ENCODE measurements at regions of chr16 and their contacts with region 1.

Region 1: GRCh38 chr16:85393674-85394483 is 219.2 kb upstream of the GSE1 start:
- DNase-seq: peak; percentile 75
- H3K4me3 ChIP-seq: no peak overlapping the region
- H3K27ac ChIP-seq: no peak overlapping the region
- H3K4me1 ChIP-seq: peaks cover 43% of the 10 kb centered on the region
- H3K27me3 ChIP-seq: no peaks in the 10 kb centered on the region
- CTCF ChIP-seq: peak; percentile 96

Region 2: DNA sequence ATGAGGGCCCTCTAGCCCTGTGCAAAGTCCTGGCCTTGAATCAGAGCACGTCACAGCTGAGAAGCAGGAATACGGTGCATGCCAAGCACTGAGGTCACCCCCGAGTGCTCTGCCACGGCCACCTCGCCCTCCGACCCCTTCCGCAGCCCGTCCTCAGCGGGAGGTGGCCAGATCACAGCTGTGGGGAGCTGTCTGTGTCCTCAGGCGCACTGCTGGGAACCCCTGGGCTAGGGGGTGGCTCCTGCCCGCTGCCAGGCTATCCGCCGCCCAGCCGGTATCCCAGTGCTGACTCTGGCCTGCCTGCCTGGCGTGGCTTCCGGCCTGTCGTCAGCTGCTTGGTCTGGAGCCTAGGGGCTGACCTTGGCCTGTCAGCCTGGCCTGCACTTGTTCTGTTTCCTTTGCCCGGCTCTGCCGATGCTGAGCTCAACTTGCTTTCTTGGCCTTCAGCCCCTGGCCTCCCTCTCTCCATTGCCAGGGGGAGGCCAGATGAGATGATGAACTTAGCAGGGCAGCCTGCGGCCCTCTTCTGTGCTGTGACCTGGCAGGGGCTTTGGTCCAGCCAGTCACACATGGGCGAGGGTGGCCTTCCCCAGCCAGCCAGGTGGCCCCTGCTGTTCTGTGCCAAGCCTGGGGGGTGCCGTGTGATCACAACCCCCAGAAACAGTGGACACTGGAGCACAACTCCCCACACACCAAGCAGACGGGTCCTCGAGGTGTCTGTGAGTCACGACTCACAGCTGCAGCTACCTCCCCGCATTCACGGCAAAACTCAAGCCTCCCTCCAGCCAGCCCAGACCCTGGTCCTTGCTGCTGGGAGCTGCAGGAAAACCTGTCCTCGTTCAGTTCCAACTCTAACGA is 459.9 kb before region 1 on chr16:
- CTCF ChIA-PET with region 1: no interaction called
- POLR2A ChIA-PET with region 1: no interaction called
- intact Hi-C with region 1: no loop called
- DNase-seq: no peak
- H3K4me3 ChIP-seq: no peak overlapping the region
- H3K27ac ChIP-seq: no peak overlapping the region
- H3K4me1 ChIP-seq: no peaks in the 10 kb centered on the region
- H3K27me3 ChIP-seq: no peaks in the 10 kb centered on the region
- CTCF ChIP-seq: no peak

Region 3: DNA sequence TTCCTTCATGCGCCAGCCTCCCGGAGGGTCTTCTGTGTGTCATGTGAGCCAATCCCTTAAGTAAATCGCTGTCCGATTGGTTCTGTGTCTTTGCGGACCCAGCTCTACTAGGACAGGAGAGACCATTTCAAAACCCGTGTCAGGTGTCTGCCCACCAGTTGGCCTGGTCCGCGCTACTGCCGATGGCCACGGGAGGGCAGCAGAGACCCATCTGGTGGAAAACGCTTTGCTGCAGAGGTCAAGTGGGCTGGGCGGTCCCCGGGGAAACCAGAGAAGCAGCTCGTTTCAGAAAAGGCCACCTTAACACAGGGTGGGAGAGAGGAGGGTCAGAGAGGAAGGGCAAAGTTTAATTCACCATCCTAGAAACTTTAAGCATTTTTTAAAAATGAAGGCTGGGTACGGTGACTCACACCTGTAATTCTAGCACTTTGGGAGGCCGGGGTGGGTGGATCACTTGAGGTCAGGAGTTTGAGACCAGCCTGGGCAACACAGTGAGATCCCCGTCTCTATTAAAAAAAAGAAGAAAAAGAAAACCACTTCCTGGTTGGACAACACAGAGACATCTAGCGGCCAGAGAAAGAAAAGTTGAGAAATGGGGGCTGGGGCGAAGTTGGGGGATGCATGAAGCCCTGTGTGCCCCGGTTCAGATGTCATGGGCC is 278.8 kb before region 1 on chr16:
- CTCF ChIA-PET with region 1: no interaction called
- POLR2A ChIA-PET with region 1: no interaction called
- intact Hi-C with region 1: loop called (anchors 10 kb)
- DNase-seq: peak; percentile 83
- H3K4me3 ChIP-seq: peak overlapping the region; percentile 18
- H3K27ac ChIP-seq: peak overlapping the region; percentile 55
- H3K4me1 ChIP-seq: peaks cover 4% of the 10 kb centered on the region
- H3K27me3 ChIP-seq: no peaks in the 10 kb centered on the region
- CTCF ChIP-seq: peak; percentile 98

Measured in A673 (cell line).